Activated T-helper 1 cell treated with anti-CD3 and anti-CD28 coated beads, Interleukin-12 subunit alpha, Interleukin-12 subunit beta, Interleukin-2, Interleukin-4 antibody, amounts not matched to agents 30 ng/mL and 10 ng/mL and 1 ng/mL, durations not matched to agents 14 hours and 24 hours and 36 hours (primary cell): ENCODE measurements at regions of chr11 and their contacts with region 1.

Region 1: GRCh38 chr11:96112201-96113128 is 188.6 kb upstream of the MTMR2 start:
- DNase-seq: no peak
- H3K4me3 Mint-ChIP-seq: peak overlapping the region; percentile 50
- H3K27ac Mint-ChIP-seq: peak overlapping the region; percentile 84
- H3K4me1 Mint-ChIP-seq: peaks cover 32% of the 10 kb centered on the region
- H3K27me3 Mint-ChIP-seq: no peaks in the 10 kb centered on the region

Region 2: DNA sequence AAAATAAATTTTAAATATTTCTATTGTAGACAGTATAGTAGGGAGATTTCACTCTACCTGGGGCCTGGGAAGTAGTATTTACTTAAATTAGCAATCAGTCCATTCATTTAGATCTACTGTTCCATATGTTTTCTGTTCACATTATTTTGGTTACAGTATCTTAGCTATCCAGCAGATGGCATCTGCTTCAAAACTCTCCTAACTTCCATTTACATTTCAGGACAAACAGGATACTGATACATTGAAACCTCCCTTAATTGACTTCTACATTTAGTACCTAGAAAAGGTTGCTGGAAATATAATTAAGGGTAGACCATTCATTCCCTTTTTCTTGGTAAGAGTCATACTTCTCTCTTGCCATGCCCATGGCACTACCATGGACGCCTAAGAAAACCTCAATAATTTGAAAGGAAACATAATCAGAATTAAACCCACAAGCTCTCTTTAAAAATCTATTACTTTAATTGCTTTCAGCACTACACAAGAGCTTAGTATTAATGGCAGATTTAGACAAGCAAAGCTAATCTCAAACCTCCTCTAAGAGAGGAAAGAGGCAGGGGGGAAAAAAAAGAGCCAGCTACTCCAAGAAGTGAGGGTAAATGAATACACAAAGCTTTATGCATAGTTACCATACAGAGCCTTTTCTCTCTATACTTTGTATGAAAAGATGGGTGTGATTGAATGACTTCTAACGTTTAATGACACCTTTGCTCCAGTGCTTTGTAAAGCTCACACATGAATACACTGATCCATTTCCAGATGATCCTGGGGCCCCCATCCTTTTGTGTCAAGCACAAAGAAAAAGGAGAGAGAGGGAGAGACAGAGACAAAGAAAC is 57.4 kb before region 1 on chr11:
- intact Hi-C with region 1: loop called (anchors 2 kb)
- DNase-seq: no peak
- H3K4me3 Mint-ChIP-seq: no peak overlapping the region
- H3K27ac Mint-ChIP-seq: no peak overlapping the region
- H3K4me1 Mint-ChIP-seq: peaks cover 60% of the 10 kb centered on the region
- H3K27me3 Mint-ChIP-seq: no peaks in the 10 kb centered on the region

Region 3: GRCh38 chr11:96075532-96075959 is 36.9 kb before region 1 on chr11:
- intact Hi-C with region 1: loop called (anchors 5 kb)
- DNase-seq: no peak
- H3K4me3 Mint-ChIP-seq: peak overlapping the region; percentile 15
- H3K27ac Mint-ChIP-seq: peak overlapping the region; percentile 78
- H3K4me1 Mint-ChIP-seq: peaks cover 35% of the 10 kb centered on the region
- H3K27me3 Mint-ChIP-seq: no peaks in the 10 kb centered on the region

Region 4: DNA sequence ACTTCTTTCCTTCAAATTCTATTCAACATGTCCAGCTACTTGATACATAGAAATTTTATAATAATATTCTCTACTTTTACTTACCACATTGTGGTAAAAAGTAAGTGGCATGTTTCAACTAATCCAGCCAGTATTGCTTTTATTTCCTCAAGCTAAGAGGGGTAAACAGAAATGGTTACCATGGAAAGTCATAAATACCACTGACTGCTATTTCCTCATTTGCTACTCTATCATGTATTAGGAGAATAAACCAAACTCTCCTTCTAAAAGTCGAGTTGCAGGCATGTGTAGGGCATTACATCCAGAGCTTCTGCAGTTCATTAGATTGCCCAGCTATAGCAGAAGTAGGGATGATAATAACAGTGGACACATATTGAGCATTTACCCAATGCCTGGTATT is 22.1 kb after region 1 on chr11:
- intact Hi-C with region 1: loop called (anchors 2 kb)
- DNase-seq: no peak
- H3K4me3 Mint-ChIP-seq: no peak overlapping the region
- H3K27ac Mint-ChIP-seq: no peak overlapping the region
- H3K4me1 Mint-ChIP-seq: peaks cover 48% of the 10 kb centered on the region
- H3K27me3 Mint-ChIP-seq: no peaks in the 10 kb centered on the region

Region 5: DNA sequence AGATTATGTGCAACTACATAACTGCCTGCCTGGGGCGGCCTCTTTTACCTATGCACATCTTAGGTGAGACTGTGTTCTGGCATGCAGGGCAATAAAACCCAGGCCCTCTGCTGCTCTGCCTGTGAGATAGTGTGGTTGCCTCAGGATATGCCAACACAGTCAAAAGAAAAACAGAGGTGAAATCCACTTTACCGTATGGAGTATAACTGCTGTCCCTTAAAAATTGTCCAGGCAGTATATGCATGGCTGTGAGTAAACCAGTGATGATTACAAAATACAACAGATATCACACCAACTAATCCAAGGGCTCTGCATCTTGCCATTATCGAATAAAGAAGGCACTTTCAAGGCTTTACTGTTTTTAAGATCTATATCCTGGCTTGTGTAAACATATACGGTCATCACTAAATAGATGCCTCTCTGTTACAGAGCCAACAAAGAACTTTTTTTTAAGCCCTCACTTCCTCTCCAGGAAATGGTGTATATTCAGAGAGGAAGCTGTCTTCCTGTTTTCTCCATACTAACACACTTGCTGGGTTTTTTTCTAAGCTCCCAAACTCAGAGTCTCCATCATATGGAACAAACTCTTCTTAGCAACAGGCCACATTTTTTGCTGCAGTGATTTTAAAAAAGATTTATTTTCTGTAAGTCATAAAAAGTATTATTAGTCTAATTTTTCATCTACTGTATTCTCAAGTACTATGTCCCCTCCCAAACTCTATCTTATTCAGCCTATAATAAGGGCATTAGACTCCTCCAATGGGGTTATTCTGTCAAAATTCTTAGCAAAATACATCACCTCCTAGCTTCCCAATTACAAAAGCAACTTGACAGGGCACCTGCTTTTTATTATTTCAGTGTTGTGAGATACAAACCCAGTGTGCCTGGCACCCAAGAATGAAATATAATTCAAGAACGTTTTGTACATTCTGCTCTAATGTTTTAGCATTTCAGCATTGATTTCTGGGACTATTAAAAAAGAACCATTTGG is 95.3 kb after region 1 on chr11:
- intact Hi-C with region 1: loop called (anchors 2 kb)
- DNase-seq: no peak
- H3K4me3 Mint-ChIP-seq: peak overlapping the region; percentile 72
- H3K27ac Mint-ChIP-seq: peak overlapping the region; percentile 95
- H3K4me1 Mint-ChIP-seq: peaks cover 83% of the 10 kb centered on the region
- H3K27me3 Mint-ChIP-seq: no peaks in the 10 kb centered on the region